Panc1 (cell line): ENCODE measurements at regions of chr10 and their contacts with region 1.

Region 1: DNA sequence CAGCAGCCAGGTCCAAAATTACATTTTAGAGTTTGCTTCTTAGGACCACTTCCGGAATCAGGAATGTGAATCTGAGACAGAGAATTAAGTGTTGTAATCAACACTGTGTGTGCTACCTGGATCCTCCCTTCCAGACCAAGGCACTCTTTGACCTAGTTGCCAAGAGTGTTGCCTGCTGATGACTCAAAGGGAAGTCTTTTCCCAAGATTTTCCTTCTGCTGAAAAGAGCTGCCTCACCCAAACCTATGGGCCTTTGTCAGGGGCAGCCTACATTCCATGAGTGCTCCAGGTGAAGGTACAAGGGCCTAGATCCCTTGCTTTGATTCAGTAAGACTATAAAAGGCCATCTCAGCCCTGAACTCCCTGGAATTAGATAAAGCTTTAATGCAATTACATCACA is 712.5 kb upstream of the ANKRD30A start:
- DNase-seq: no peak
- ATAC-seq: no peak
- H3K4me3 ChIP-seq: no peak overlapping the region
- H3K27ac ChIP-seq: no peak overlapping the region
- H3K4me1 ChIP-seq: no peaks in the 10 kb centered on the region
- H3K27me3 ChIP-seq: no peaks in the 10 kb centered on the region
- CTCF ChIP-seq: no peak

Region 2: DNA sequence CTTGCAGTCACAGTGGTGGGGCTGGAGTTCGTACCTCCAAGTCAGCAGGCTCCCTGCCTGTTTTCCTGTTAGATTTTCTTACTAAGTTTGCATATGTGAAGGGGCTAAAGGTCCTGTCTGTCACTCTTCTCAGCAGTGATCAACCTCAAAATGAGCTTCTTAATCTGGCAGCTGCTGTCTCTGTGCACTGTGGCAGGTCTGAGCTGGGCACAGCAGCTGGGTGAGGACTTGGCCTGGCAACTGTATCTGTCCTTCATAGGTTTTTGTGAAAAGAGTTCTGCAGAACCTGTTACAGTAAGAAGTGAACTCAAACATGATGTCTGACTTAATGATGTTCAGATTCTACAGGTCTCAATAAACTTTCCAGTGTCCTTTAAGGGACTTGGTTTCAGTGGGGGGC is 839.1 kb before region 1 on chr10:
- CTCF ChIA-PET with region 1: interaction called, 12 read pairs
- POLR2A ChIA-PET with region 1: no interaction called
- in situ Hi-C with region 1: no loop called
- intact Hi-C with region 1: no loop called
- DNase-seq: no peak
- ATAC-seq: no peak
- H3K4me3 ChIP-seq: no peak overlapping the region
- H3K27ac ChIP-seq: no peak overlapping the region
- H3K4me1 ChIP-seq: no peaks in the 10 kb centered on the region
- H3K27me3 ChIP-seq: no peaks in the 10 kb centered on the region
- CTCF ChIP-seq: no peak

Region 3: GRCh38 chr10:36278176-36278575 is 134.8 kb before region 1 on chr10:
- CTCF ChIA-PET with region 1: no interaction called
- POLR2A ChIA-PET with region 1: no interaction called
- in situ Hi-C with region 1: no loop called
- intact Hi-C with region 1: no loop called
- DNase-seq: no peak
- ATAC-seq: no peak
- H3K4me3 ChIP-seq: no peak overlapping the region
- H3K27ac ChIP-seq: no peak overlapping the region
- H3K4me1 ChIP-seq: no peaks in the 10 kb centered on the region
- H3K27me3 ChIP-seq: no peaks in the 10 kb centered on the region
- CTCF ChIP-seq: no peak